ENCODE measurements at regions of chr14 and their contacts with region 1.

Region 1: DNA sequence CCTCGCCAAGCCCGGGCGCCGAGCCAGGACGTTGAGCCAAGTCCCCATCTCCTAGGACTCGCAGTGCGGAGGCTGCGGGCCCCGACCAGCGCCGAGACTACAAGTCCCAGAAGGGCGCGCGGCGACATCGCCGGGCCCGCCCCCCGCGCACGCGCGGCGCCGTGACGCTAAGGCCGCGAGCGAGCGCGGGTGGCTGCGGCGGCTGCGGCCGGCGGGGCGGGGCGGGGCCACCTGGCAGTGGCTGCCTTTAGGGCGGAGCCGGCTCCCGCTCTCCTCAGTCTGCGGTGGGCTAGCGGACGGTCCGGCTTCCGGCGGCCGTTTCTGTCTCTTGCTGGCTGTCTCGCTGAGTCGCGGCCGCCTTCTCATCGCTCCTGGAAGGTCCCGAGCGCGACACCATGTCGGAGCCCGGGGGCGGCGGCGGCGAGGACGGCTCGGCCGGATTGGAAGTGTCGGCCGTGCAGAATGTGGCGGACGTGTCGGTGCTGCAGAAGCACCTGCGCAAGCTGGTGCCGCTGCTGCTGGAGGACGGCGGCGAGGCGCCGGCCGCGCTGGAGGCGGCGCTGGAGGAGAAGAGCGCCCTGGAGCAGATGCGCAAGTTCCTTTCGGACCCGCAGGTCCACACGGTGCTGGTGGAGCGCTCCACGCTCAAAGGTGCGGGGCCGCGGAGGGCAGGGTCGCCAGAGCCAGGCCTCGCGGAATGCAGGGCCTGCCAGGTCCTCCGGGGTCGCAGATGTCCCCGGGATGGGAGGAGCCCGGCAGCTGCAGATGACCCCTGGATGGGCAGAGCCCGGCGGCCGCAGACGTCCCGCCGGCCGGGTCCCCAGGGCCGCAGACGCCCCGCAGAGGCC is at the start of gene DYNC1H1:
- DNase-seq: peak; percentile 97
- H3K4me3 ChIP-seq: peak within 1 kb of the TSS; percentile 94 to 99
- H3K27ac ChIP-seq: peak within 1 kb of the TSS; percentile 91 to 96
- H3K4me1 ChIP-seq: peaks cover 25% of the 10 kb centered on the region
- H3K27me3 ChIP-seq: no peaks in the 10 kb centered on the region
- CTCF ChIP-seq: peak in 1 of 3 experiments; percentile 8
- POLR2A ChIP-seq: peak; percentile 96
- total RNA-seq, gene DYNC1H1: 538 to 691 TPM

Region 2: DNA sequence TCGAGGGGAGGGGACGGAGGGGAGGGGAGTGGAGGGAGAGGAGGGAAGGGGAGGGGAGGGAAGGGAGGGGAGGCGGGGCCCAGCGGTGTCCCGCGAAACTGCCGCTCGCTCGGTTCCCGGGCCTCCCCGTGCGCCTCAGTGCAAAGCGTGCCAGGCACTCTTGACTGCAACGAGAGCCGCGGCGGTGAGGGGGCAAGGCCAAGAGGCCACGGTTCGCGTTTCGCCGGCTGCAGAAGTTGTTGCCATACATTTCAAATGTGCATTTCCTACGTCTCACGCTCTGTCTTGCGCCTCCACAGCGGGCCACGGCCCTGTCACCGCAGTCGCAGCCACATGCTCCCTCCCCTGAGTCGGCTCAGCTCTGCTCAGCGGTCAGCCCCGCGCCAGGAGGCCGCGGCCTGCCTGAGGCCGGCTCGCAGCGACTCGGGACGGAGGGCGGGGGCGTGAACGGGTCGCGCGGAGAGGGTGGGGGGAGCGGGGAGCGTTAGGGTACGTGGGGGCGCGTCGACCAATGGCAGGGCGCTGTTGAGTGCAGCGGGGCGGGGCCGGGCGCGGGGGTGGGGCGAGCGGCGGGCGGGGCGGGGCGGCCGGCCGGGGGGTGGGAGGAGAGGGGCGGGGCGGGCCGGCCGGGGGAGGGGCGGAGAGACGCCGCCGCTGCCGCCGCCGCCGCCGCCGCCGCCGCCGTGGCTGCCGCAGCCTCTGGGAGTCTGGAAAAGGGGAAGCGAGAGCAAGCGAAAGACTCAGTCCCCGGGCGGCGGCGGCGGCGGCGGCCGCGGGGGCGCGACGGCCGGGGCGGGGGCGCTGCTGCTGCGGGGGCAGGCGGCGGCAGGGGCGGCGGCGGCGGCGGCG is 203.3 kb before region 1 on chr14 and contains the start of gene PPP2R5C:
- intact Hi-C with region 1: loop called (anchors 10 kb)
- DNase-seq: peak; percentile 95
- H3K4me3 ChIP-seq: peak within 1 kb of the TSS; percentile 88 to 97
- H3K27ac ChIP-seq: peak within 1 kb of the TSS; percentile 94 to 96
- H3K4me1 ChIP-seq: peaks cover 10% of the 10 kb centered on the region
- H3K27me3 ChIP-seq: no peaks in the 10 kb centered on the region
- CTCF ChIP-seq: no peak
- POLR2A ChIP-seq: peak; percentile 47
- total RNA-seq, gene PPP2R5C: 106 to 126 TPM

Measured in testis (tissue), 5 donors.